Activated naive CD4-positive, alpha-beta T cell treated with anti-CD3 and anti-CD28 coated beads for 36 hours (primary cell): ENCODE measurements at regions of chr9 and their contacts with region 1.

Region 1: DNA sequence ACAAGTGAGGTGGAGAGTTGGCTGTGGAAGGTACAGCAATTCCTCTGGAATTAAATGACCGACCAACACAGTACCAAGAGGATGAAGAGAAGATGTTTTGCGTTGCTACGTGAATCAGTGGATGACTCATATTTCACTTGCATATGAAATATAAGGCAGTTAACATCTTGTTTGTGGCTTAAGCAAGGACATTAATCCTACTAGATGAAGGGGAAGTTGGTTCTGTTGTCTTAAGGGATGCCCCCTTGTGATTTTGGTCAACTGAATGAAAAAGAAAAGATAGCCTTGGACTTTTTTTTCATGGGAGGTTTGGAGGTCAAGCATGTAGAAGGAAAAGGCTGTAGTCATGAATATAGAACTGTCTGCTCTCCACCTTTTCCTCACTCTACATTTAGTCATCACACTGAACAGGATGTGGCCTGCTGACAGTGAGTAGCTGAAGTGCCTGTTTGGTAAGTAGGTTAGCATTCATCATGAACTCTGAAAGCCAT is 33.9 kb downstream of the VLDLR start:
- DNase-seq: peak; percentile 42
- H3K4me3 Mint-ChIP-seq: no peak overlapping the region
- H3K27ac Mint-ChIP-seq: no peak overlapping the region
- H3K4me1 Mint-ChIP-seq: peaks cover 8% of the 10 kb centered on the region
- H3K27me3 Mint-ChIP-seq: no peaks in the 10 kb centered on the region

Region 2: DNA sequence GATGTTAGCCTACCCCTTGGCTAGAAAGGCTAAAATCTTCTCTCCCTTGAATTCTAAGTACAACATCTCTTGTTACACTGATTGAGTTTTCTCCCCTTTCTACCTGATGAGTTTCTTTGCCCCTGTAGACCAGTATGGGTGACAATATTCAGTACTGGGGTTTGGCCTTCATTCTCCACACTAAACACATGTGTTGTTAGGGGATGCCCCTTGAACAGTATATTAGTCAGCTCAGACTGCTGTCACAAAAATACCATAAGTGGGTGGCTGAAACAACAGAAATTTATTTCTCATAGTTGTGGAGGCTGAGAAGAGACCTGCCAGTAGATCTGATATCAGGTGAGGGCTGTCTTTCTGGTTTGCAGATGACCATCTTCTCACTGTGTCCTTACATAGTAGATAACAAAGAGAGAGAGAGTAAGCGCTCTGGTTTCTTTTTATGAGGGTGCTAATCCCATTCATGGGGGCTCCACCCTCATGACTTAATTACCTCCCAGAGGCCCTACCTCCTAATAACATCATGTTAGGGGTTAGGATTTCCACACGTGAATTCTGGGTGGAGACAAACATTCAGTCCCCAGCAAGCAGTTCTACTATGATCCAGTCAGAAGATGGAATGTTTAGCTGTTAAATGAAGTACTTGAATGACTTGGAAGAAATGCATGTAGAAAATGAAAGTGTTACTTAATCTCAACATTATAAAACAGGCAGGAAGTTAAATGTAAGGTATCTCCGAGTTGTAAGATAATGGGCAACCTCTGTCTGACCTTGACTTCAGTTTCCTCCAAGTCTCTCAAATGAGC is 16.4 kb before region 1 on chr9:
- CTCF ChIA-PET with region 1: no interaction called
- intact Hi-C with region 1: loop called (anchors 1 kb)
- DNase-seq: peak; percentile 7
- H3K4me3 Mint-ChIP-seq: no peak overlapping the region
- H3K27ac Mint-ChIP-seq: no peak overlapping the region
- H3K4me1 Mint-ChIP-seq: peaks cover 9% of the 10 kb centered on the region
- H3K27me3 Mint-ChIP-seq: peaks cover 20% of the 10 kb centered on the region